ENCODE measurements at regions of chr7 and their contacts with region 1.

Region 1: GRCh38 chr7:156764016-156764669 is 123.6 kb downstream of the RNF32 start:
- DNase-seq: peak; percentile 68
- H3K4me3 ChIP-seq: no peak overlapping the region
- H3K27ac ChIP-seq: no peak overlapping the region
- H3K4me1 ChIP-seq: no peaks in the 10 kb centered on the region
- H3K27me3 ChIP-seq: no peaks in the 10 kb centered on the region
- CTCF ChIP-seq: peak; percentile 65

Region 2: DNA sequence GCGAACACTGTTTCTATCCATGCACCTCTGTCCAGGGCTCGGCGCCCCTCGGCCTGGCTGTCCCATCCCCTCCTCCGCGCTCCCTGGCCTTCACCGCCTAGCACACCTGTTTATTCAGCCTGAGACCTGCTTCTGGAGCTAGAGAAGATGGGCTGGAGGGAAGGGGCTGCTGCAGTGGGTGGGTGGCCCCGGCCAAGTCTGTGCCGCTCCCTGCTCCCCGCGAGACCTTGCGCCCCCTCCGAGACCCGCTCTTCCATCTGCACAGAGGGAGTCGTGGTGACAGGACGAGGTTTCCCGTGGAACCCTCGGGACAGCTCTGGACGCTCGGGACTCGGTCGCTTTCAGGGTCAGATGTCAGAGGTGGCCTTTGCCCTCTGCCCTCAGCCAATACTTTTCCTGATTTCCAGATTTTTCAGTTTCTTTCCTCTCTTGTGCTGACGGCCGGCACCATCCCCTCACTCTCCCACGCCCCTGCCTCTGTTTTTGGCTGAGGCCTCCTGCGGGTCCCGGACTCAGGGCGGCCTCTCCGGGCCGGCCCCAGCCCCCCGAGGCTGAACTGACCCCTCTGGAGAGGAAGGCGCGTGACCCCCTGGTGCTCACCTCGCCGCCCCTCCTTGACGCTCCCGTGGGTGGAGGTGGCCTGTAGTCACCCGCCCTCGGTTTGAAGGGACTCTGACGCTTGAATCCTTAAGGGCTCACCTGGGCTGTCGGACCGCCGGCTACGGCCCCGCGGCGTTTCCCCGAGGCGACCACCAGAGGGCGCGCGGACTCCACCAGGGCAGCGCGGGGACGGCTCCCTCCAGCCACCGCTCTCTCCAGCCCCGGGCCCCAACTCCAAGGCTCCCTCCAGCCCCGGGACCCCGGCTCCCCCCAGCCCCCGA is 967.5 kb before region 1 on chr7:
- intact Hi-C with region 1: loop called (anchors 5 kb)
- DNase-seq: peak; percentile 63
- H3K4me3 ChIP-seq: no peak overlapping the region
- H3K27ac ChIP-seq: no peak overlapping the region
- H3K4me1 ChIP-seq: no peaks in the 10 kb centered on the region
- H3K27me3 ChIP-seq: no peaks in the 10 kb centered on the region
- CTCF ChIP-seq: peak; percentile 82

Region 3: GRCh38 chr7:155815332-155816191 is 948.6 kb before region 1 on chr7:
- intact Hi-C with region 1: loop called (anchors 5 kb)
- DNase-seq: peak; percentile 82
- H3K4me3 ChIP-seq: no peak overlapping the region
- H3K27ac ChIP-seq: no peak overlapping the region
- H3K4me1 ChIP-seq: no peaks in the 10 kb centered on the region
- H3K27me3 ChIP-seq: peaks cover 29% of the 10 kb centered on the region
- CTCF ChIP-seq: peak; percentile 70

Region 4: DNA sequence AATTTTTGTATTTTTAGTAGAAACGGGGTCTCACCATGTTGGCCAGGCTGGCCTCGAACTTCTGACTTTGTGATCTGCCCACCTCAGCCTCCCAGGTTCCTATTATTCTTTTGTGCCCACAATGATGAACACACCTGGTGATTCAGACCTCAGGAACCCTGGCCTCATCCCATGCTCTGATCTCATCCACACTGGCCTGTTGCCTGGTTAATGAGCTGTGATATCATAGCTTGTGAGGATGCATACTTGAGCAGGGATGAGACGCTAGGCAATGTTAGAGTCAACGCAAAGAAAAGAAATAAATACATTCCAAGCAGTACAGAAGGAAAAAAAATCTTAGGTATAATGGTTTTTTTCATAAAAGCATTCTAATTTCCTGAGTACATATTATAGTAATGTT is 205.9 kb before region 1 on chr7:
- intact Hi-C with region 1: loop called (anchors 10 kb)
- DNase-seq: no peak
- H3K4me3 ChIP-seq: no peak overlapping the region
- H3K27ac ChIP-seq: no peak overlapping the region
- H3K4me1 ChIP-seq: no peaks in the 10 kb centered on the region
- H3K27me3 ChIP-seq: no peaks in the 10 kb centered on the region
- CTCF ChIP-seq: no peak

Region 5: DNA sequence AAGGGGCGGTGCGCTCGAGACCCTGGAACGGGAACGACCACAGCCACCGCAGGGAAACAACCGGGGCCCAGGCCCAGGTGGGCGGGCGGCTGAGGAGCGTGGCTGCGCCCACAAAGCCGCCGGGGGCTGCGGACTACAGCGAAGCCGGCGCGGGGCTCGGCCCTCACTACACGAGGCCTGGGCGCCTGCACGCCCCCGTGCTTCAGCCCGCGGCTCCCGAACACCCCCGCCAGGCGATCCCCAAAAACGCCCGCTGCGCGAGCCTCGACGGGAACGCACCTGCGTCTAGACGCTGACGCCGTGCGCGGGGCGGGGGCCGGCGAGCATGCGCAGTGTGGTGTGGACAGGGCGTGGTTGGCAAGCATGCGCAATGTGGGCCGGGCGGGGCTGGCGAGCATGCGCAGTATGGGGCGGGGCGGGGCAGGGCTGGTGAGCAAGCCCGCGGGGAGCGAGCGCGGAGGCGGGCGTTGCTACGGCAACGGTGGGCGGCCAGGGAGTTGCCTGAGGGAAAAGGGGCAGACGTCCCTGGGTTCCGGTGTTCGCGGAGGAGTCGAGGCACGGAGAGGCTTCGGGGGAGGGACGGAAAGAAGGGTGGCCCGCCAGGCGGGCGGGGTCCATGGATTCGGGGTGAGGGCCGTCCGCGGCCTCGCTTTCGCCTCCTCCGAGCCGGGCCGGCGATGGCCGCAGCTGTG is 123.7 kb before region 1 on chr7 and contains the start of gene RNF32:
- intact Hi-C with region 1: loop called (anchors 10 kb)
- DNase-seq: peak; percentile 96
- H3K4me3 ChIP-seq: peak within 1 kb of the TSS; percentile 79
- H3K27ac ChIP-seq: peak within 1 kb of the TSS; percentile 80
- H3K4me1 ChIP-seq: peaks cover 3% of the 10 kb centered on the region
- H3K27me3 ChIP-seq: no peaks in the 10 kb centered on the region
- CTCF ChIP-seq: no peak
- total RNA-seq, gene RNF32: 2.0 TPM

Region 6: GRCh38 chr7:156703773-156704482 is 60.2 kb before region 1 on chr7:
- intact Hi-C with region 1: no loop called
- DNase-seq: no peak
- H3K4me3 ChIP-seq: no peak overlapping the region
- H3K27ac ChIP-seq: no peak overlapping the region
- H3K4me1 ChIP-seq: no peaks in the 10 kb centered on the region
- H3K27me3 ChIP-seq: no peaks in the 10 kb centered on the region
- CTCF ChIP-seq: no peak